ENCODE measurements at regions of chr5 and their contacts with region 1.

Region 1: DNA sequence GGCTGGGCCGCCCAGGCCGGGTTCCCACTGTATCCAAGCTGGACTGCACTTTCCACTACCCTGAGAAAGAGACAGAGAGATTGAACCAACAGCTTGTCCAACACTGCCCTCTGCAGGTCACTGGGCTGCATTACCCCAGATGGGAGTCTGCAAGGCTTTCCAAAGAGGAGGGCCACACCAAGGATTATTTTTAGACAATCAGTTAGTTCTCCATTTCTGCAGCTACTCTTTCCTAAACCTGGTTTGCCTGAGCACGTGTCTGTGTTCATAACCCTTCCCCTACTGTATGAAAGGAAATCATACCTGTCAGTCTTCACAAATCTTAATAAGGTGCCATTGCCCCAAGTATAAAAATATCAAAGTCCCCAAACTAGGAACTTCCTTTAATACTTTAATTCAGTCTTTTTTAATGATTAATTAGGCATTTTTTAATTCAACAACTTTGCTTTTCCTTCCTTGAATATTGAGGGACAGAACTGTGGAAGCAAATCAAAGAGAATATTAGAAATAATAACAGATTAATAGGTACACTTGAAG is 13.4 kb upstream of the FGF1 start:
- DNase-seq: peak; percentile 74 to 96
- H3K4me3 ChIP-seq: no peak overlapping the region
- H3K27ac ChIP-seq: no peak overlapping the region
- H3K4me1 ChIP-seq: peaks cover 3 to 30% (median 14%) of the 10 kb centered on the region in 4 experiments
- H3K27me3 ChIP-seq: no peaks in the 10 kb centered on the region
- CTCF ChIP-seq: peak; percentile 83 to 99 (median 97)
- EP300 ChIP-seq: no peak
- POLR2A ChIP-seq: no peak
- RAD21 ChIP-seq: peak; percentile 100

Region 2: DNA sequence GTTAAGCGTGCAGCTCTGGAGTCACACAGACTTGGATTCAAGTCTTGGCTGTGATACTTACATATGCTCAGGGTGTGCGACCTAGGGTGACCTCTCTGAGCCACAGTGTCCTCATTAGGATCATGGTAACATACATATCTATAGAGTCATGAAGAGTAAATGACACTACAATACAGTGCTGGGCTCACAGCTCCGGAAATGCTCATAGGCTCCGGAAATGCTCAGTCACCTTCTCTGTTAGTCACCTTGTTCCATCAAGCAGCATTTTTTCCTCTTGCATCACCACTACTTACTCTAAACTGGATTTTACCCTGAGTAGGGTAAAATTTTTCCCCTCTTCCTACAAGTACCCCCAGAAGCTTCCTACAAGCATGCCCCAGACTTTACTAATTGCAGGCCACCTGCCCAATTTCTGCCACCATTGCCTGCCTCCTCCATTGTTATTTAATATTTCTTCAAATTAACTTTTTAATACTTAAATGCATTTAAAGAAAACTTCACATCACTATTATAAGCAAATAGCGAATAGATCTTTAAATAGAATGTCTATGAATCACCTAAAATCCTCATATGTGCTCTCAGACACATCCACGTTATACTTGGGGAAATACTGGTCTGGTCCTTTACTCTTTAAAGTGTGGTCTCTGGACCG is 226.8 kb before region 1 on chr5:
- CTCF ChIA-PET with region 1: no interaction called
- POLR2A ChIA-PET with region 1: no interaction called
- DNase-seq: no peak
- H3K4me3 ChIP-seq: no peak overlapping the region
- H3K27ac ChIP-seq: no peak overlapping the region
- H3K4me1 ChIP-seq: peaks cover 3 to 17% (median 10%) of the 10 kb centered on the region in 4 experiments
- H3K27me3 ChIP-seq: no peaks in the 10 kb centered on the region
- CTCF ChIP-seq: no peak
- EP300 ChIP-seq: no peak
- POLR2A ChIP-seq: no peak
- RAD21 ChIP-seq: no peak

Region 3: DNA sequence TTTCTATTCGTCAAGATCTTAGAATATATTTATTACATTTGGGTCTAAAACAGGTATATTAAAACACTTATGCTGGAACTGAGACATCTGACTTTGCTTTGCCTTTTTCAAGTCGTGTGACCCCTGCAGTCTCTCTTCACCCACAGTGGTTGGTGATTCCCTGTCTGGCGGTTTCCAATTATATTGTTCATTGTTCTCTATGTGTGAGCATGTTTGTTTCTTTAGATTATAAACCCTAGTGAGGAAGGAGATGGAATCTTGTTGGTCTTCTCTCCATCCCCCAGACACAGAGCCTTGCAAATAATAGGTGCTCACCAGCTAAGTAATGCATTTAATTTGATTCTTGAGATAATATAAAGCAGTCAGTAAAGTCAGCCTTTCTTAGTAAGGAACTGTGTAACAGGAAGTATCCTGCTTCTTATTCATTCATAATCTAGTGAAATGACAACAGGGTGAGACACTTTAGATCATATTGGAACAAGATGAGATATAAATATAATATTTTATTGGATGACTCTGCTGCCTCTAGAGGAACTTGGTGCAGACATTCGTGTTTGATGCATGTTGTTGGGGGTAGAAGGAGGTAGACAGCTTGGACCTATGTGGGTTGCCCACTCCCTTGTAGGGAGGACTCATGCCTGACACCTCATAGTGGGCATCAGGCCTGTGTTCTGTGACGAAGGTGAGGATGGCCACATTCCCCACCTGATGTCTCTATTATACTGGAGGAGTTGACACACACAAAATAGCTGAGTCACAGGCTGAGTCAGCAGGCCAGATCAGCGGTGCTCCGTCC is 101.5 kb before region 1 on chr5:
- CTCF ChIA-PET with region 1: interaction called, 10 read pairs
- POLR2A ChIA-PET with region 1: interaction called, 3 read pairs
- DNase-seq: no peak
- H3K4me3 ChIP-seq: no peak overlapping the region
- H3K27ac ChIP-seq: no peak overlapping the region
- H3K4me1 ChIP-seq: no peaks in the 10 kb centered on the region; a peak in 1 of 7 replicates
- H3K27me3 ChIP-seq: 0 out of 7 replicates have a peak, but pooled peaks cover 0 to 3% (median 0%) of the 10 kb centered on the region in 4 experiments
- CTCF ChIP-seq: no peak
- EP300 ChIP-seq: no peak
- POLR2A ChIP-seq: no peak
- RAD21 ChIP-seq: no peak

Region 4: GRCh38 chr5:142611154-142611553 is 88.1 kb before region 1 on chr5:
- CTCF ChIA-PET with region 1: interaction called, 65 read pairs
- POLR2A ChIA-PET with region 1: no interaction called
- DNase-seq: peak; percentile 49 to 93
- H3K4me3 ChIP-seq: no peak overlapping the region
- H3K27ac ChIP-seq: no peak overlapping the region
- H3K4me1 ChIP-seq: no peaks in the 10 kb centered on the region
- H3K27me3 ChIP-seq: no peaks in the 10 kb centered on the region
- CTCF ChIP-seq: peak; percentile 78 to 94 (median 90)
- EP300 ChIP-seq: no peak
- POLR2A ChIP-seq: no peak
- RAD21 ChIP-seq: peak; percentile 92 to 94

Region 5: DNA sequence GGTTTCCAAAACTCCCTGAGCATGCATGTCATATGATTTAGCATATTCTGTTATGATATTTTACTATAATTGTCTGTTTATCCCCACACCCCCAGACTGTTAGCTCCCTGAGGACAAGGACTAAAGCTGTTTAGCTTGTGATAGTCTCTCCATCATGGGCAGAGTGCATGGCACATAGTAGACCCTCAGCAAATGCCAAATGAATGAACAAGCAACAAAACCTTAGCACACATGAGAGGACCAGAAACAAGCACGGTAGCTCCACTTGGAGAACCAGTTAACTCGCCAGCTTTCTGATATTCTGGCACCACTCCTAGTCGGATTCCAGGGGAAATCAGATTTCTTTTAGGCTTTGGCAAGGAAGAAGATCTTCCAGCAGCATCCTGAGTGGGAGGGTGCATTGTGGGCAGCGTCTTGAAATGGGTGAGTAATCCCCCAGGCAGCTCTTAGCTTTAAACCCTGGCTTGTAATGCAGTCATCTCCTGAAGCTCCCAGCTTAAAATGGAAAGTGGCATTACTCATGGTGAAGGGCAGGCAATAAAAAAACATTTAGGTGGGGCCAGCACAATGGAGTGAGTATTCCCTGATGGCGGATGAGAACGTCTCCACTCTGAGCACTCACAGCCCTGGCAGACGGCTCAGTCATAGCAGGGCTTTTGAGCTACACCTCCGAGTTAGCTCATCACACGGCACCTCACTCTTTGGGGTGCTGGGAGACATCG is 54.5 kb before region 1 on chr5:
- CTCF ChIA-PET with region 1: interaction called, 605 read pairs
- POLR2A ChIA-PET with region 1: interaction called, 4 read pairs
- DNase-seq: no peak
- H3K4me3 ChIP-seq: no peak overlapping the region
- H3K27ac ChIP-seq: no peak overlapping the region
- H3K4me1 ChIP-seq: no peaks in the 10 kb centered on the region
- H3K27me3 ChIP-seq: no peaks in the 10 kb centered on the region
- CTCF ChIP-seq: no peak
- EP300 ChIP-seq: no peak
- POLR2A ChIP-seq: no peak
- RAD21 ChIP-seq: no peak

Region 6: DNA sequence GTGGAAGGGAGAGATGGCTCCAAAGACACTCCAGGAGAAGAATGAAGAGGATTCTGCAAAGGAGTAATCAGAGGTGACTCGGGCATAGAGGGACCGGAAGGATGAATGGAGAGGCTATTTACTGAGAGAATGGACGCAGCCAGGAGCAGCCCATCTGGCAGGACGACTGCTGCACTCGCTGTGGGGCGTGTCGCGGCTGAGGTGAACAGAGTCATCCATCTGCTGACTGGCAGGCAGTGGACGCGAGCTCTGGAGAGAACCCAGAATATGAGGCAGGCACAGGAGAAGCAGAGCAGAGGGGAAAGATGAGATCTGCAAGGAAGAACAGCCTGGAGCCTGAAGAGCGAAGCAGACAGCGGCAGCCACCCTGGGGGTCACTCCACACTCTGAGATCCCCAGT is 29.8 kb before region 1 on chr5:
- CTCF ChIA-PET with region 1: interaction called, 605 read pairs
- POLR2A ChIA-PET with region 1: interaction called, 3 read pairs
- DNase-seq: no peak
- H3K4me3 ChIP-seq: no peak overlapping the region
- H3K27ac ChIP-seq: no peak overlapping the region
- H3K4me1 ChIP-seq: peaks cover 0 to 4% (median 0%) of the 10 kb centered on the region in 4 experiments; a peak in 1 of 7 replicates
- H3K27me3 ChIP-seq: no peaks in the 10 kb centered on the region; a peak in 3 of 7 replicates
- CTCF ChIP-seq: no peak
- EP300 ChIP-seq: no peak
- POLR2A ChIP-seq: no peak
- RAD21 ChIP-seq: no peak

Region 7: GRCh38 chr5:142874537-142874936 is 175.3 kb after region 1 on chr5:
- CTCF ChIA-PET with region 1: interaction called, 16 read pairs
- POLR2A ChIA-PET with region 1: interaction called, 4 read pairs
- DNase-seq: no peak
- H3K4me3 ChIP-seq: no peak overlapping the region
- H3K27ac ChIP-seq: no peak overlapping the region
- H3K4me1 ChIP-seq: peaks cover 0 to 3% (median 2%) of the 10 kb centered on the region in 4 experiments; a peak in 2 of 7 replicates
- H3K27me3 ChIP-seq: no peaks in the 10 kb centered on the region
- CTCF ChIP-seq: no peak
- EP300 ChIP-seq: no peak
- POLR2A ChIP-seq: no peak
- RAD21 ChIP-seq: no peak

Region 8: DNA sequence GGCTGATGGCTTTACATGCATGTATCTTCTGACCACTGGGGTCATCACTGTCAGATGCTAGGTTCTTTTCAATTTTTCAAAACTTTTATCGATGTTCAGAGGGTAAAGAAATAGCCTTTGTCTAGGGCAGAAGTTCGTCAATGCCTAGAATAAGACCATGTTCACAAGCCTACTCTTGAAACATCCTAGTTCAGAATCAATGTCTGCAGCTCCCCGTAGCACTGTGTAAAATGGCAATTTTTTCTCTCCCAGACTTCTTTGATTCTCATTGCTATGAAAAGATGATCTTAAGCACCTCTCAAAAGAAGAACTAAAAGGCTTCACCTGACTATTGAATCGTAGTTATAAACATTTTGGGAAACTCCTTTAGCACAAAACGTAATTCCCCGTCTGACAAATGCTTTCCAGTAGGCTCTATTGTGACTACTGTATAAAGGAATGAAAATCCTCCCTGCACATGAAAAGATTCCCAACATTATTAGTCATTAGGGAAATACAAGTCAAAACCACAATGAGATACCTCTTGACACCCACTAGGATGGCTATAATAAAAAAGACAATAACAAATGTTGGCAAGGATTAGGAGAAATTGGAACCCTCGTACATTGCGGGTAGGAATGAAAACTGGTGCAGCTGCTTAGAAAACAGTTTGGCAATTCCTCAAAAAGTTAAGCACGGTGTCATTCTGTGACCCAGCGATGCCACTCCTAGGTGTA is 334.4 kb after region 1 on chr5:
- CTCF ChIA-PET with region 1: no interaction called
- POLR2A ChIA-PET with region 1: no interaction called
- DNase-seq: no peak
- H3K4me3 ChIP-seq: no peak overlapping the region
- H3K27ac ChIP-seq: no peak overlapping the region
- H3K4me1 ChIP-seq: peaks cover 0 to 12% (median 6%) of the 10 kb centered on the region in 4 experiments; a peak in 5 of 7 replicates
- H3K27me3 ChIP-seq: no peaks in the 10 kb centered on the region; a peak in 1 of 7 replicates
- CTCF ChIP-seq: no peak
- EP300 ChIP-seq: no peak
- POLR2A ChIP-seq: no peak
- RAD21 ChIP-seq: no peak

Measured in H1 (cell line).